ENCODE measurements at regions of chr2 and their contacts with region 1.

Region 1: GRCh38 chr2:714005-714741 is 37.0 kb upstream of the TMEM18 start:
- DNase-seq: peak; percentile 69 to 88 (median 73)
- H3K4me3 ChIP-seq: no peak overlapping the region
- H3K27ac ChIP-seq: no peak overlapping the region
- H3K4me1 ChIP-seq: no peaks in the 10 kb centered on the region
- H3K27me3 ChIP-seq: peaks cover 9% of the 10 kb centered on the region
- CTCF ChIP-seq: peak; percentile 61 to 76 (median 68)
- POLR2A ChIP-seq: no peak

Region 2: GRCh38 chr2:903229-903900 is 189.2 kb after region 1 on chr2:
- intact Hi-C with region 1: loop called in 1 of 2 experiments (anchors 10 kb)
- DNase-seq: peak in 2 of 7 donors; percentile 14 to 31
- H3K4me3 ChIP-seq: no peak overlapping the region
- H3K27ac ChIP-seq: no peak overlapping the region
- H3K4me1 ChIP-seq: no peaks in the 10 kb centered on the region
- H3K27me3 ChIP-seq: no peaks in the 10 kb centered on the region
- CTCF ChIP-seq: peak in 3 of 6 experiments; percentile 20 to 34 (median 30)
- POLR2A ChIP-seq: no peak

Region 3: GRCh38 chr2:1546023-1546591 is 831.9 kb after region 1 on chr2:
- intact Hi-C with region 1: loop called (anchors 5 to 10 kb)
- DNase-seq: peak in 6 of 7 donors; percentile 21 to 71 (median 52)
- H3K4me3 ChIP-seq: no peak overlapping the region
- H3K27ac ChIP-seq: no peak overlapping the region
- H3K4me1 ChIP-seq: no peaks in the 10 kb centered on the region
- H3K27me3 ChIP-seq: no peaks in the 10 kb centered on the region
- CTCF ChIP-seq: peak; percentile 67 to 82 (median 76)
- POLR2A ChIP-seq: no peak